ENCODE measurements at regions of chr3 and their contacts with region 1.

Region 1: GRCh38 chr3:13091898-13092611 is 18.8 kb upstream of the IQSEC1 start:
- DNase-seq: peak; percentile 66 to 91 (median 82)
- ATAC-seq: peak; percentile 94
- H3K4me3 ChIP-seq: no peak overlapping the region
- H3K4me3 Mint-ChIP-seq: no peak overlapping the region
- H3K27ac ChIP-seq: no peak overlapping the region
- H3K27ac Mint-ChIP-seq: peak overlapping the region; percentile 5
- H3K4me1 ChIP-seq: peaks cover 6% of the 10 kb centered on the region
- H3K4me1 Mint-ChIP-seq: peaks cover 4% of the 10 kb centered on the region
- H3K27me3 ChIP-seq: no peaks in the 10 kb centered on the region
- H3K27me3 Mint-ChIP-seq: peaks cover 15% of the 10 kb centered on the region
- CTCF ChIP-seq: peak; percentile 93

Region 2: GRCh38 chr3:13073326-13074005 is 18.6 kb before region 1 on chr3 and contains the start of gene IQSEC1:
- CTCF ChIA-PET with region 1: interaction called, 10 read pairs
- POLR2A ChIA-PET with region 1: no interaction called
- intact Hi-C with region 1: no loop called
- DNase-seq: peak; percentile 46 to 93 (median 76)
- ATAC-seq: peak; percentile 74
- H3K4me3 ChIP-seq: peak within 1 kb of the TSS; percentile 49 to 56
- H3K4me3 Mint-ChIP-seq: peak within 1 kb of the TSS; percentile 85
- H3K27ac ChIP-seq: peak within 1 kb of the TSS; percentile 32 to 74
- H3K27ac Mint-ChIP-seq: peak within 1 kb of the TSS; percentile 68
- H3K4me1 ChIP-seq: peaks cover 56% of the 10 kb centered on the region
- H3K4me1 Mint-ChIP-seq: peaks cover 48% of the 10 kb centered on the region
- H3K27me3 ChIP-seq: peaks cover 0 to 5% of the 10 kb centered on the region in 2 experiments
- H3K27me3 Mint-ChIP-seq: no peaks in the 10 kb centered on the region
- CTCF ChIP-seq: no peak
- total RNA-seq, gene IQSEC1: 71.2 to 79.0 TPM

Region 3: DNA sequence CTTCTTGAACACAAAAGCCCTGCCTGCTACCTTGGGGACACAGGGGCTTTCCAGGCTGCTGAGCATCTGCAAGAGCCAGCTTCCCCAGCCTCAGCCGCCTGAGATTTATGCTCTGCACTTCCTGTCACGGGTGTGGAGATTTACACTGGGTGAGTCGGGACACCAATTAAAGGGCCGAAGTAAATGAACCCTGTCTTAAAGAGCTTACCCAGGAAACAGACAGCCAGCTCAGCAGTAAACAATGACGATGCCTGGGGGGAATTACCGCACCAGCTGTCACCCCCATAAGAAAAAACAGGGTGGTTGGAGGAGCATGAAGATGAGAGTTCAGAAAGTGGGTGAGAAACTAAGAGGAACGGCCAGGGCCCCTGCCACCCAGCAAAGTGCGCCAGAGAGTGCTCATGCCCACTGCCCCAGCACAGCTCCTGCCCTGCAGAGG is 18.6 kb after region 1 on chr3:
- CTCF ChIA-PET with region 1: interaction called, 8 read pairs
- POLR2A ChIA-PET with region 1: no interaction called
- intact Hi-C with region 1: loop called in 1 of 2 experiments (anchors 1 kb)
- DNase-seq: peak in 7 of 9 experiments; percentile 17 to 89 (median 60)
- ATAC-seq: peak; percentile 86
- H3K4me3 ChIP-seq: no peak overlapping the region
- H3K4me3 Mint-ChIP-seq: peak overlapping the region; percentile 54
- H3K27ac ChIP-seq: peak overlapping the region; percentile 18 to 43
- H3K27ac Mint-ChIP-seq: peak overlapping the region; percentile 90
- H3K4me1 ChIP-seq: peaks cover 9% of the 10 kb centered on the region
- H3K4me1 Mint-ChIP-seq: peaks cover 14% of the 10 kb centered on the region
- H3K27me3 ChIP-seq: peaks cover 0 to 3% of the 10 kb centered on the region in 2 experiments
- H3K27me3 Mint-ChIP-seq: peaks cover 4% of the 10 kb centered on the region
- CTCF ChIP-seq: no peak

Region 4: DNA sequence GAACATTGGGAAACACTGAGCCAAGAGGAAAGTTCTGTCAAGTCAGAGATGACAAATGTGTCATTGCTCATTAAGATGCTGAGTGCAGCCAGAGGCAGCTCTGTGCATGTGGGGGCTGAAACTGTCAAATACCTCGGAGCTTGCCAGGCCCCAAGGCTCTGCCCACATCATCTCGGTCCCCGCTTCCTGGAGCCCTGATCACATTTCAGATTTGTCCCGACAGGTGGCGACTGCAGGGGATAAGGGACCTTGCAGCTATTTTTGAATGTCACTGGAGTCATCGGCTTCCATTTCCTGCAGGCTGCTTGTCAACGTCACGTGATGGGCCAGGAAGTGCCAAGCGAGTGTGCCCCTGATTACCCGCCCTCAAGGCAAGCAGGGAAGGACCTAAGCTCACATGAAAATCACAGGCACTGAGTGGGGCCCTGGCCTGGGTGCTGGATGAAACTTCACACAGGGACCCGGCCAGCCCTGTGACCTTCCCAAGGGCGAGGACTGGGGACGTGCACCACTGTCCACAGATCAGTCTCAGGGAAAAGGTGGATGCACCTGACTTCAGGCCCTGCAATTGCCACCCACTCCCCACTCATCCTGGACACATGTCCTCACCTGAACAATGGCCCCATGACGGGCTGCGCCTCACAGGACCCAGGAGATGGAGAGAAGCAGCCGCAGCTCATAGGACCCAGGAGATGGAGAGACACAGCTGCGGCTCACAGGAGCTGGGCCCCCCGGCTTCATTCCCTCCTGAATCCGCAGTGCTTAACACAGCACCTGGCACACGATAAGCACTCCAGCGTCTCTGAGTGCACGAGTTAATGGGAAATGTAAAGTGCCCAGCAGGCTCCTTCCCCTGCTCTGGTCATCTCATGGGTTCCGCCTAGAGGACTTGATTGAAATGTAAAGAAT is 254.7 kb after region 1 on chr3:
- CTCF ChIA-PET with region 1: interaction called, 5 read pairs
- POLR2A ChIA-PET with region 1: no interaction called
- intact Hi-C with region 1: loop called in 1 of 2 experiments (anchors 1 kb)
- DNase-seq: peak; percentile 53 to 91 (median 75)
- ATAC-seq: peak; percentile 90
- H3K4me3 ChIP-seq: peak overlapping the region in 1 of 2 experiments; percentile 14
- H3K4me3 Mint-ChIP-seq: peak overlapping the region; percentile 42
- H3K27ac ChIP-seq: peak overlapping the region; percentile 18 to 55
- H3K27ac Mint-ChIP-seq: peak overlapping the region; percentile 88
- H3K4me1 ChIP-seq: peaks cover 49% of the 10 kb centered on the region
- H3K4me1 Mint-ChIP-seq: peaks cover 61% of the 10 kb centered on the region
- H3K27me3 ChIP-seq: no peaks in the 10 kb centered on the region
- H3K27me3 Mint-ChIP-seq: no peaks in the 10 kb centered on the region
- CTCF ChIP-seq: peak; percentile 44

Region 5: DNA sequence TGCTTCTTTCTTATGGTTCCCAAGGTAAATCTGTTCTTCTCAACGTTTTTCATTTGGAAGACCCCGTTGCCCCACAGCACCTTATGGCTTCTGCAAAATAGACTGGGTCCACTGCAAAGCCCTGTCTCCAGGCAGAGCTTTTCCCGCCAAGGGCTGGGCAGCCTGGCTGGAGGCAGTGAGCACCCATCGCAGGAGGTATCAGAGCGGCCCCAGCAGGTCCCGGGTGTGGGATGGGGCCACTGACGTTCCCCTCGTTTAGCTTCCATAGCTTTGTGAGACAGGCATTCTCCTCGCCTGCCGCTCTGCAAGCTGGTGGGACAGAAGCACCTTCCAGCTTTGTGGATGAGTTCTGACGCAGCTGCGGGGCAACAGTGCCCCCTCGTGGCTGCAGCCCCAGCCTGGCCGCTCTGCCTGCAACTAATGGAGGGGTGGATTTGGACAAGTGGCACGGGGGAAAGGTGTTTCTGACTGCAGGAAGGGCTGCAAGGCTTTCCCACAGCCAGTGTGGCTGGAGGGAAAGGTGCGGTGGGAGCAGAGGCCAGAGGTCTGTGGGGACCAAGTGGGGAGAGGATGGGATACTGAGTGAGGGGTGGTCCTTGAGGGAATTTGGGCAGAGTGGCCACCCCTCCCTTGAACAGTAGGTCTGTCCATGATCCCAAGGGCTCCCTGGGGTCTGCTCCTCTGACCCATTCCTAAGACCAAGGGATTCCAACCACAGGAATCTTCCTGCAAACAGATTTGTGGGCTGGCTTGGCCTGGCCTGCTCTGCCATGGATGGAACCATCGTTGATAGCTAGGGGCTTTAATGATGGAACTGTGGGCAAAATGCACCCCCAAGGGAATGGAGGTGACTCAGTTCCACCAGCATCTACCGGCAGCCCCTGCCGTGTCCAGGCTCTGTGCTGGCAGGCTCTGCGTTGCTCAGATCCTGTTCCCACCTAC is 556.3 kb after region 1 on chr3:
- CTCF ChIA-PET with region 1: interaction called, 36 read pairs
- POLR2A ChIA-PET with region 1: no interaction called
- intact Hi-C with region 1: loop called in 1 of 2 experiments (anchors 1 kb)
- DNase-seq: peak; percentile 56 to 88 (median 75)
- ATAC-seq: peak; percentile 27
- H3K4me3 ChIP-seq: no peak overlapping the region
- H3K4me3 Mint-ChIP-seq: no peak overlapping the region
- H3K27ac ChIP-seq: no peak overlapping the region
- H3K27ac Mint-ChIP-seq: no peak overlapping the region
- H3K4me1 ChIP-seq: peaks cover 33% of the 10 kb centered on the region
- H3K4me1 Mint-ChIP-seq: peaks cover 39% of the 10 kb centered on the region
- H3K27me3 ChIP-seq: peaks cover 0 to 3% of the 10 kb centered on the region in 2 experiments
- H3K27me3 Mint-ChIP-seq: peaks cover 15% of the 10 kb centered on the region
- CTCF ChIP-seq: peak; percentile 94

Region 6: DNA sequence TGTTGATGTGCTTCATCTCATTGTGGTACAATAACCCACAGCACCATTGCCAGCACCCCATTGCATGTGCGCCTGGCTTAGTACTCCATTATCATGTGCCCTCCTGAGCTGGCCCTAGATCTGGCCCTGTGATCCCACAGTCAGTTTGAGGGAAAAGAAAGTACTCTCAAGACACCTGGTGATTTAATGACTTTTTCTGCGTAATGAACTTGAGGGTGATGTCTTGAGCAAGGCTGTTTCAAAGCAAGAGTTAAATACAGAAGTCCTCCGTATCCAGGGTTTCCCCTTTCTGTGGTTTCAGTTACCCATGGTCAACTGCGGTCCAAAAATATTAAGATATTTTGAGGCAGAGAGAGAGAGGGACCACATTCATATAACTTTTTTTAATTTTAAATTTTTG is 1599.2 kb after region 1 on chr3:
- CTCF ChIA-PET with region 1: no interaction called
- POLR2A ChIA-PET with region 1: no interaction called
- intact Hi-C with region 1: no loop called
- DNase-seq: no peak
- ATAC-seq: no peak
- H3K4me3 ChIP-seq: no peak overlapping the region
- H3K4me3 Mint-ChIP-seq: no peak overlapping the region
- H3K27ac ChIP-seq: no peak overlapping the region
- H3K27ac Mint-ChIP-seq: no peak overlapping the region
- H3K4me1 ChIP-seq: no peaks in the 10 kb centered on the region
- H3K4me1 Mint-ChIP-seq: no peaks in the 10 kb centered on the region
- H3K27me3 ChIP-seq: no peaks in the 10 kb centered on the region
- H3K27me3 Mint-ChIP-seq: no peaks in the 10 kb centered on the region
- CTCF ChIP-seq: no peak